ENCODE measurements at regions of chr2 and their contacts with region 1.

Region 1: GRCh38 chr2:143110758-143111428 is 18.3 kb upstream of the ARHGAP15 start:
- DNase-seq: peak; percentile 81 to 90 (median 88)
- H3K4me3 ChIP-seq: peak overlapping the region in 5 of 7 experiments; percentile 21 to 64 (median 43)
- H3K27ac ChIP-seq: peak overlapping the region in 1 of 2 experiments; percentile 70
- H3K4me1 ChIP-seq: peaks cover 5 to 9% (median 7%) of the 10 kb centered on the region in 4 experiments
- H3K27me3 ChIP-seq: no peaks in the 10 kb centered on the region

Region 2: DNA sequence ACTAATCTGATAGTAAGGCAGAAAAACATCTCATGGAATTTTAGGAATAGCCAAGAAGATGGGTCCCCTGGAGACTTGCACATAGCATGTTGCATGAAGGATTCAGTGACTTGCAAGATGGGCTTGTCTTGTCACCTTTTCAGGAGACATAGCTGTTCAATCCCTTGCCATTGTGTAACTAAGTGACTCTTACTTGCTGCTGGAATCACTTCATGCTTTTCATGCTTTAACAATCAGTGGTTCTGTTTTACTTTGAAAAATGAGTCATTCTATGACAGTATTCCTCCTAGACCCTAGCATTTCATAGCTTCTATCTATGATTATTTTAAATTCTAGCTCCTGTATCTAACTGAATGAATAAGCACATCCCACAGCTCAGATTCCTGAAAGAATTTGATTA is 230.6 kb before region 1 on chr2:
- CTCF ChIA-PET with region 1: no interaction called
- POLR2A ChIA-PET with region 1: no interaction called
- DNase-seq: no peak
- H3K4me3 ChIP-seq: no peak overlapping the region
- H3K27ac ChIP-seq: no peak overlapping the region
- H3K4me1 ChIP-seq: no peaks in the 10 kb centered on the region
- H3K27me3 ChIP-seq: no peaks in the 10 kb centered on the region

Region 3: GRCh38 chr2:142915502-142915901 is 195.4 kb before region 1 on chr2:
- CTCF ChIA-PET with region 1: no interaction called
- POLR2A ChIA-PET with region 1: no interaction called
- DNase-seq: no peak
- H3K4me3 ChIP-seq: no peak overlapping the region
- H3K27ac ChIP-seq: no peak overlapping the region
- H3K4me1 ChIP-seq: no peaks in the 10 kb centered on the region
- H3K27me3 ChIP-seq: no peaks in the 10 kb centered on the region

Region 4: GRCh38 chr2:143087033-143087432 is 23.9 kb before region 1 on chr2:
- CTCF ChIA-PET with region 1: interaction called, 10 read pairs
- POLR2A ChIA-PET with region 1: no interaction called
- DNase-seq: no peak
- H3K4me3 ChIP-seq: no peak overlapping the region
- H3K27ac ChIP-seq: no peak overlapping the region
- H3K4me1 ChIP-seq: peaks cover 0 to 3% (median 2%) of the 10 kb centered on the region in 4 experiments
- H3K27me3 ChIP-seq: no peaks in the 10 kb centered on the region

Region 5: GRCh38 chr2:143217512-143218115 is 106.7 kb after region 1 on chr2:
- CTCF ChIA-PET with region 1: interaction called, 39 read pairs
- POLR2A ChIA-PET with region 1: no interaction called
- DNase-seq: peak in 2 of 3 donors; percentile 48 to 54
- H3K4me3 ChIP-seq: no peak overlapping the region
- H3K27ac ChIP-seq: no peak overlapping the region
- H3K4me1 ChIP-seq: peaks cover 0 to 13% (median 7%) of the 10 kb centered on the region in 4 experiments
- H3K27me3 ChIP-seq: no peaks in the 10 kb centered on the region

Region 6: DNA sequence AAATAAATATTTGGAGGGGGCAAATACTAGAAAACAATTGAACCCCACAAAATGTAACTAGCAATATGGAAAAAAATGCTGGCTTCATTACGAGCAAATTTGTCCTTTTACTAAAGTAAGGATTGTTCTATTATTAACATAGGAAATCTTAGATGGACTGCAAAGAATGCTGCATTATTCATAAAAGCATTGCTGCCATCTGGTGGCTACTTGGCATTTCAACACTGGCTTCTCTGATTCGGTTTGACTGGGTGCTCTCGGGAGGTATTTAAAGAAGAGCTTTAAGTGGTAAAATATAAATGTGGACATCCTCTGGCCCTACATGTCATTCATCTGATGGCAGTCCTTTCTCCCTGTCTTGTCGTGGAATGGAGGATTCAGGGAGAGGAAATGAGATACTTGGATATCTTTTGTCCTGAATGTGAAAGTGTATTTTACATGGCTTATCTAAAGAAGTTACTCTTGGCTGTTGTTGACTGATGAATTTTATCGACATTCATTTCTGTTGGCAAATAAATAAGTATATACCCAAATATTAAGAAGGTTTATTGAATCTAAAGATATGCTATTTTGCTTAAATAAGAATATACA is 148.6 kb after region 1 on chr2:
- CTCF ChIA-PET with region 1: interaction called, 24 read pairs
- POLR2A ChIA-PET with region 1: no interaction called
- DNase-seq: peak; percentile 84 to 88 (median 87)
- H3K4me3 ChIP-seq: peak overlapping the region in 2 of 7 experiments; percentile 50 to 60
- H3K27ac ChIP-seq: peak overlapping the region in 1 of 2 experiments; percentile 62
- H3K4me1 ChIP-seq: peaks cover 35 to 77% (median 43%) of the 10 kb centered on the region in 4 experiments
- H3K27me3 ChIP-seq: no peaks in the 10 kb centered on the region